ENCODE measurements at regions of chr1 and their contacts with region 1.

Region 1: GRCh38 chr1:166910396-166910994 is 34.4 kb upstream of the TADA1 start:
- DNase-seq: peak; percentile 55 to 93
- ATAC-seq: peak; percentile 95 to 99 (median 99)
- H3K4me3 ChIP-seq: no peak overlapping the region
- H3K4me3 Mint-ChIP-seq: no peak overlapping the region
- H3K27ac ChIP-seq: no peak overlapping the region
- H3K27ac Mint-ChIP-seq: peak overlapping the region in 1 of 2 donors; percentile 61
- H3K4me1 ChIP-seq: no peaks in the 10 kb centered on the region
- H3K4me1 Mint-ChIP-seq: peaks cover 18 to 20% of the 10 kb centered on the region in 2 donors
- H3K27me3 ChIP-seq: no peaks in the 10 kb centered on the region
- H3K27me3 Mint-ChIP-seq: peaks cover 0 to 8% of the 10 kb centered on the region in 2 donors
- CTCF ChIP-seq: peak; percentile 91

Region 2: DNA sequence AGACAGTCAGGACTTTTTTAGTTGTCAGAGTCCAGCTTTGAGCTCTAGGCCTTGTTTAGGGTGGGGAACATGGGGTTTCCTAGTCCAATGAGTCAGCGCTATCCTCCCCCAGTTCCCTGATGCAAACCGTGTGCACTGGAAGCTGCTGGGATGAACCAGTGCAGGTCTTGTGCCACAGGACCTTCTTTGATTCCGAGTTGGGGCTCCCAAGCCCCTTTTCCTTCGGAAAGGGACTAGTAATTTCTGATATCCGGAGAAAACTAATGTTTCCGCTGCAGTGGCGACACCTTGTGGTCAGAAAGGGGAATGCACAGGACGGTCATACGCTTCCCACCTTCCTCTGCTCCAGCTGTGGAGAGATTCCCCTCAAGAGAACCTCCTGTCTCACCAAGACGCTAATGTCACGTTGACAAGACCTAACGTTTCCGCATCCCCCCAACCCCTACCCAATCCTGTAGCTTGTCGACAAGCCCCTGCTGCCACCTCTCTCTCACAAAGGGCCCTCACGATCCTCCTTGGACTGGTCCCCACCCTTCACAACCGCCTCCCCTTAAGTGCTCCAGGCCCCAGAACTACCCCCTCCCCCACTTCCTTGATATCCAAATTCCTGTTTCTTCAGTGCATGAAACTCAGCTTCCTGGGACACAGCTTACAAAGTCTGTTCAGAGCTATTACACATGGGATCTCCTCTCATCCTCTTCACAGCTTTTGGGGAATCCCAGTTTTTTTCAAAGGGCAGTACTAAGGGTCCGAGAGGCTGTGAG is 148.7 kb after region 1 on chr1:
- intact Hi-C with region 1: loop called (anchors 1 kb)
- DNase-seq: peak; percentile 72 to 84
- ATAC-seq: peak; percentile 63 to 81 (median 77)
- H3K4me3 ChIP-seq: no peak overlapping the region
- H3K4me3 Mint-ChIP-seq: no peak overlapping the region
- H3K27ac ChIP-seq: no peak overlapping the region
- H3K27ac Mint-ChIP-seq: peak overlapping the region in 1 of 2 donors; percentile 2
- H3K4me1 ChIP-seq: peaks cover 24% of the 10 kb centered on the region
- H3K4me1 Mint-ChIP-seq: peaks cover 7 to 23% of the 10 kb centered on the region in 2 donors
- H3K27me3 ChIP-seq: no peaks in the 10 kb centered on the region
- H3K27me3 Mint-ChIP-seq: peaks cover 0 to 3% of the 10 kb centered on the region in 2 donors
- CTCF ChIP-seq: peak; percentile 95

Region 3: GRCh38 chr1:167128261-167129227 is 218.0 kb after region 1 on chr1:
- intact Hi-C with region 1: loop called (anchors 5 kb)
- DNase-seq: peak in 1 of 2 donors; percentile 49
- ATAC-seq: peak in 1 of 3 donors; percentile 41
- H3K4me3 ChIP-seq: no peak overlapping the region
- H3K4me3 Mint-ChIP-seq: no peak overlapping the region
- H3K27ac ChIP-seq: no peak overlapping the region
- H3K27ac Mint-ChIP-seq: no peak overlapping the region
- H3K4me1 ChIP-seq: no peaks in the 10 kb centered on the region
- H3K4me1 Mint-ChIP-seq: peaks cover 0 to 4% of the 10 kb centered on the region in 2 donors
- H3K27me3 ChIP-seq: no peaks in the 10 kb centered on the region
- H3K27me3 Mint-ChIP-seq: peaks cover 35 to 37% of the 10 kb centered on the region in 2 donors
- CTCF ChIP-seq: peak; percentile 17

Measured in natural killer cell (primary cell).